ENCODE measurements at regions of chr5 and their contacts with region 1.

Region 1: DNA sequence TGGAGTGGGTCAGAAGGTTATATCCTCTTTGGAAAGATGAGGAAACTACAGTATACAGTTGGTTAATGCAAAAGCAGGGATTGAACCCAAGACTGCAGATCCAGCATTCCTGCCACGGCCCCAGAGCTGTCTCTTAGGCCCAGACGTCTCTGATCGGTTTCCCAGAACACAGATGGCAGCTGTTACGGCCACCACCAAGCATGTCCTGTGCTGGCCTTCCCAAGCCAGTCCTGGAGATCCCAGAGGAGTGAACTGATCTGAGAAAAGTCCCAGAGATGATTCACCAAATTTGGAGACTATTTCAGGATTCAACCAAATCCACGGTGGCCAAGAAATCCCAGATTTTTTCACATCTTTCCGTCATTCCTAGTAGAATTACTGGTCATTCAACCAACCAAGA is 20.1 kb downstream of the TNIP1 start:
- DNase-seq: no peak
- H3K4me3 ChIP-seq: no peak overlapping the region
- H3K27ac ChIP-seq: peak overlapping the region in 3 of 4 donors; percentile 30 to 50 (median 50)
- H3K4me1 ChIP-seq: peaks cover 56 to 75% (median 68%) of the 10 kb centered on the region in 4 donors
- H3K27me3 ChIP-seq: no peaks in the 10 kb centered on the region
- CTCF ChIP-seq: no peak
- EP300 ChIP-seq: no peak
- POLR2A ChIP-seq: no peak

Region 2: DNA sequence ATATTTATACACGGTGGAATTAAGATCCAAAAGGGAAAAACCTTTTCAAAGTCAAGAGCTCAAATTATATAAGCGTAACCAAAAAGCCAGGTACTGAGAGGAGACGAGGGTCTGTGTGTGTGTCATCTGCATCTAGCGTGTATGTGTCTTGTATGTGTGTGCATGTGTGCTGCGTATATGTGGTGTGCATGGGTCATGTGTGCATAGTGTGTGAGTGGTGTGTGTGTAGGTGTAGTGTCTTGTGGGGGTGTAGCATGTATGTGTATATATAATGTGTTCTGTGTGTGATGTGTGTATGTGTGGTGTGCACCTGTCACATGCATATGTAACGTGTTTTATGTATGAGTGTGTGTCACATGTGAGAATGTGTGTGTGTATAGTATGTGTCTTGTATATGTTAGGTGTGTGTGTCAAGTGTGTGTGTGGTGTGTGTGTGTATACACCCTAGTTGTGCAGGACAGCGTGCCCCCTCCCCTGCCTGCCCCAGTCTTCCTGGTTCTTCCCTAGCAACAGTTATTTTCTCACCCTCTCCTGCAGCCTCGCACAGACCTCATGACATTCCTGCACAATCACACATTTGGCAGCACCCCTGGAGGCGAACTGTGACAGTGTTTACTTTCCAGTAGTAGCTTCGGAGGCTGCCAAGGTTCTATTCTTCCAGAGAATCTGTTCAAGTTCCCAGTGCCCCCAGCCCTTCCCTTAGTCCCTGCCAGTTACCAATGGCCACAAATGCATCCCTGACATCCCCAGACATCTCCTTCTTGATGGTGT is 47.2 kb after region 1 on chr5:
- intact Hi-C with region 1: loop called (anchors 2 kb)
- DNase-seq: no peak
- H3K4me3 ChIP-seq: no peak overlapping the region
- H3K27ac ChIP-seq: peak overlapping the region; percentile 73 to 88 (median 80)
- H3K4me1 ChIP-seq: peaks cover 41 to 62% (median 57%) of the 10 kb centered on the region in 4 donors
- H3K27me3 ChIP-seq: no peaks in the 10 kb centered on the region
- CTCF ChIP-seq: peak in 1 of 3 experiments; percentile 10
- EP300 ChIP-seq: no peak
- POLR2A ChIP-seq: no peak

Measured in esophagus muscularis mucosa (tissue), 4 donors.